ENCODE measurements at regions of chr12 and their contacts with region 1.

Region 1: GRCh38 chr12:124754949-124755800 is 108.5 kb downstream of the SCARB1 start:
- DNase-seq: no peak
- ATAC-seq: no peak
- H3K4me3 Mint-ChIP-seq: no peak overlapping the region
- H3K27ac Mint-ChIP-seq: no peak overlapping the region
- H3K4me1 Mint-ChIP-seq: peaks cover 4% of the 10 kb centered on the region
- H3K27me3 Mint-ChIP-seq: peaks cover 41% of the 10 kb centered on the region
- CTCF ChIP-seq: no peak

Region 2: DNA sequence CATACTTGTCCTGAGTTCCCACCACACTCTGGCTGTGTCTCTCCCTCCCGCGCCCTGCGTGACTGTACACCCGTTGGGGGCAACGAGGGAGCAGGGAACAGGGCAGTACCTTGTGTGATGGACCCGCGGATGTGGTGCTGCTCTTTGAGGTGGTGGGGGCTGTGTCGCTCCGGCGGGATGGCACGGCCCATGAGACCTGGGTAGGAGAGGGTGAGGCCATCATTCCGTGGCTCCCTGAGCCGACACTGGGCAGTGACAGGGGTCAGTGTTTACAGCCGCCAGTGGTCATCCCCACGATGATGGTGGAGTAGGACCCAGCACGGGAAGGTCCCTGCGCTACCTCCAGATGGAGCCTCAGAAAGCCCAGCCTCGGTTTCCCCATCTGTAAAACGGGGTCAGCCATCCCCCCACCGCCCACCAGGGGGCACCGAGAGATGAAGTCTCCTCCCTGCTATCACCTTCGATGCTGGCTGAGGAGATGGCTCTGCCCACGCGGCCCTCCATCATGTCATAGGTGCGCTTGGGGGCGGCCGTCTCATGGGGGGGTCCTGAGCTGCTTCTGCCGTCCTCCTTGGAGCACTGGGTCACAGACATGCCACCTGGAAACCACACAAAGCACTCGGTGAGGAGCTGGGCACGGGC is 407.3 kb before region 1 on chr12:
- CTCF ChIA-PET with region 1: no interaction called
- POLR2A ChIA-PET with region 1: no interaction called
- intact Hi-C with region 1: loop called (anchors 5 kb)
- DNase-seq: peak; percentile 25
- ATAC-seq: peak; percentile 47
- H3K4me3 Mint-ChIP-seq: no peak overlapping the region
- H3K27ac Mint-ChIP-seq: no peak overlapping the region
- H3K4me1 Mint-ChIP-seq: no peaks in the 10 kb centered on the region
- H3K27me3 Mint-ChIP-seq: no peaks in the 10 kb centered on the region
- CTCF ChIP-seq: no peak

Region 3: GRCh38 chr12:124687917-124688316 is 67.3 kb before region 1 on chr12:
- CTCF ChIA-PET with region 1: no interaction called
- POLR2A ChIA-PET with region 1: no interaction called
- intact Hi-C with region 1: loop called (anchors 2 kb)
- DNase-seq: no peak
- ATAC-seq: peak; percentile 40
- H3K4me3 Mint-ChIP-seq: no peak overlapping the region
- H3K27ac Mint-ChIP-seq: no peak overlapping the region
- H3K4me1 Mint-ChIP-seq: peaks cover 14% of the 10 kb centered on the region
- H3K27me3 Mint-ChIP-seq: peaks cover 13% of the 10 kb centered on the region
- CTCF ChIP-seq: no peak

Measured in activated B cell treated with CpG ODN at 0.5 μM for 24 hours (primary cell).